OCI-LY7 (cell line): ENCODE measurements at regions of chr3 and their contacts with region 1.

Region 1: GRCh38 chr3:39499651-39500240 is 32.3 kb downstream of the MOBP start:
- DNase-seq: no peak
- H3K4me3 ChIP-seq: no peak overlapping the region
- H3K27ac ChIP-seq: no peak overlapping the region
- H3K4me1 ChIP-seq: no peaks in the 10 kb centered on the region
- CTCF ChIP-seq: no peak

Region 2: GRCh38 chr3:39415983-39416382 is 83.8 kb before region 1 on chr3:
- CTCF ChIA-PET with region 1: no interaction called
- POLR2A ChIA-PET with region 1: no interaction called
- intact Hi-C with region 1: loop called (anchors 2 kb)
- DNase-seq: no peak
- H3K4me3 ChIP-seq: no peak overlapping the region
- H3K27ac ChIP-seq: no peak overlapping the region
- H3K4me1 ChIP-seq: peaks cover 3% of the 10 kb centered on the region
- CTCF ChIP-seq: no peak

Region 3: DNA sequence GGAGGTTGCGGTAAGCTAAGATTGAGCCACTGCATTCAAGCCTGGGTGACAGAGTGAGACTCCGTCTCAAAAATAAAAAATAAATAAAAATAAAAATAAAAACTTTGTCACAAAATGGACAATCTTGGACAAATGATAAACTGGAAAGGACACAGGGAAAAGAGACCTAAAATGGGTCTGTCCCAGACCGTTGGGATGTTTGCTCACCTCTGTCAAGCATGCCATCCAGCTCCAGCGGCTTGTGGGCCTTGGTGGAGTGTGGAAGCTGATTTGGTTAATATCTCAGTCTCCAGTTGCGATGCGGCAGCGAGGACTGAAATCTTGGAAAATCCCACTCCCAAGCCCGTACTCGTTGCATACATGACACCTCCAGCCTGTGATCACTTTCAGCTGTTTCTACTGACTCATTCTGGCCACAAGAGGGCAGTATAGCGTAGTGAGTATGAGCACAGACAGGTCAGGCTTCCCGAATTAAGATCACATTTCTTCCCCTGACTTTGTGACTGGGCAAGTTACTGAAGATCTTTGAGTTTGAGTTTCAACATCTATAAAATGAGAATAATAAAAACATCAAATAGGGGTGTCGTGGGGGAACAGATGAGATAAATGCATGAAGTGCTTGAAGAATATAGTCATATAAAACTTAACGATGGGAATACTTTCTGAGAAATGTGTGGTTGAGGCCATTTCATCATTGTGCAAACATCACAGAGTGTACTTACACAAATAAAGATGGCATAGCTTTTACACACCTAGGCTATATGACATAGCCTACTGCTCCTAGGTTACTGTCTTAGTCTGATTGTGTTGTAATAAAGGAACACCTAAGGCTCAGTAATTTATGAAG is 51.9 kb before region 1 on chr3:
- CTCF ChIA-PET with region 1: interaction called, 3 read pairs
- POLR2A ChIA-PET with region 1: no interaction called
- intact Hi-C with region 1: loop called (anchors 1 kb)
- DNase-seq: peak; percentile 77
- H3K4me3 ChIP-seq: no peak overlapping the region
- H3K27ac ChIP-seq: no peak overlapping the region
- H3K4me1 ChIP-seq: no peaks in the 10 kb centered on the region
- CTCF ChIP-seq: peak; percentile 98

Region 4: GRCh38 chr3:40137593-40138295 is 638.0 kb after region 1 on chr3:
- CTCF ChIA-PET with region 1: no interaction called
- POLR2A ChIA-PET with region 1: no interaction called
- intact Hi-C with region 1: no loop called
- DNase-seq: no peak
- H3K4me3 ChIP-seq: no peak overlapping the region
- H3K27ac ChIP-seq: no peak overlapping the region
- H3K4me1 ChIP-seq: no peaks in the 10 kb centered on the region
- CTCF ChIP-seq: no peak